ENCODE measurements at regions of chr3 and their contacts with region 1.

Region 1: GRCh38 chr3:61927332-61927731 is 366.0 kb downstream of the PTPRG start:
- DNase-seq: peak; percentile 69 to 84
- ATAC-seq: peak; percentile 59 to 64
- H3K4me3 ChIP-seq: peak overlapping the region; percentile 4 to 42 (median 26)
- H3K27ac ChIP-seq: peak overlapping the region; percentile 86 to 93 (median 91)
- H3K4me1 ChIP-seq: peaks cover 54 to 73% of the 10 kb centered on the region in 2 donors
- H3K27me3 ChIP-seq: no peaks in the 10 kb centered on the region
- CTCF ChIP-seq: no peak
- POLR2A ChIP-seq: no peak

Region 2: GRCh38 chr3:61704807-61705206 is 222.5 kb before region 1 on chr3:
- in situ Hi-C with region 1: no loop called
- intact Hi-C with region 1: loop called (anchors 1 kb)
- DNase-seq: no peak
- ATAC-seq: no peak
- H3K4me3 ChIP-seq: no peak overlapping the region
- H3K27ac ChIP-seq: no peak overlapping the region
- H3K4me1 ChIP-seq: peaks cover under 1 to 24% of the 10 kb centered on the region in 2 donors
- H3K27me3 ChIP-seq: no peaks in the 10 kb centered on the region
- CTCF ChIP-seq: no peak
- POLR2A ChIP-seq: no peak

Region 3: GRCh38 chr3:61872077-61872706 is 55.1 kb before region 1 on chr3:
- in situ Hi-C with region 1: no loop called
- intact Hi-C with region 1: loop called (anchors 5 kb)
- DNase-seq: no peak
- ATAC-seq: no peak
- H3K4me3 ChIP-seq: no peak overlapping the region
- H3K27ac ChIP-seq: no peak overlapping the region
- H3K4me1 ChIP-seq: peaks cover 41 to 49% of the 10 kb centered on the region in 2 donors
- H3K27me3 ChIP-seq: no peaks in the 10 kb centered on the region
- CTCF ChIP-seq: no peak
- POLR2A ChIP-seq: no peak

Region 4: DNA sequence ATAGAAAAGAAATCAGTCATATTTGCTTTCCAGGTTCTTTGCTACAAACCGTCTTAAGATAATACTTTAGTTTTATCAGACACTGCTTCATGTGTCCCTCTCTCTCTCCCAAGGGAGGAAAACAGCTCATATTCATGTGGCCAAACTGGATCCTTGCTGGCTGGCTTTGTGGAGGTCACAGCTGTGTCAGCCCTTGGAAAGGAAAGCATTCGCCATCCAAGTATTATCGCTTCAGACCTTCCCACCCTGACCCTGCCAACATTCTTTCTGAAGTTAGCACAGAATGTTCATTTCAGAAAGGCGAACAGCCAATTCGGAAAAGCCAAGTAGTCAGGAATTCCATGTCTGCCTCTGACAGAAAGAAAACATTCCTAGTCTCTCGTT is 232.4 kb after region 1 on chr3:
- in situ Hi-C with region 1: no loop called
- intact Hi-C with region 1: loop called (anchors 5 kb)
- DNase-seq: peak; percentile 92
- ATAC-seq: peak; percentile 92
- H3K4me3 ChIP-seq: peak overlapping the region; percentile 2 to 40 (median 6)
- H3K27ac ChIP-seq: peak overlapping the region; percentile 89 to 93 (median 91)
- H3K4me1 ChIP-seq: peaks cover 49 to 65% of the 10 kb centered on the region in 2 donors
- H3K27me3 ChIP-seq: no peaks in the 10 kb centered on the region
- CTCF ChIP-seq: no peak
- POLR2A ChIP-seq: peak; percentile 23 to 64

Region 5: DNA sequence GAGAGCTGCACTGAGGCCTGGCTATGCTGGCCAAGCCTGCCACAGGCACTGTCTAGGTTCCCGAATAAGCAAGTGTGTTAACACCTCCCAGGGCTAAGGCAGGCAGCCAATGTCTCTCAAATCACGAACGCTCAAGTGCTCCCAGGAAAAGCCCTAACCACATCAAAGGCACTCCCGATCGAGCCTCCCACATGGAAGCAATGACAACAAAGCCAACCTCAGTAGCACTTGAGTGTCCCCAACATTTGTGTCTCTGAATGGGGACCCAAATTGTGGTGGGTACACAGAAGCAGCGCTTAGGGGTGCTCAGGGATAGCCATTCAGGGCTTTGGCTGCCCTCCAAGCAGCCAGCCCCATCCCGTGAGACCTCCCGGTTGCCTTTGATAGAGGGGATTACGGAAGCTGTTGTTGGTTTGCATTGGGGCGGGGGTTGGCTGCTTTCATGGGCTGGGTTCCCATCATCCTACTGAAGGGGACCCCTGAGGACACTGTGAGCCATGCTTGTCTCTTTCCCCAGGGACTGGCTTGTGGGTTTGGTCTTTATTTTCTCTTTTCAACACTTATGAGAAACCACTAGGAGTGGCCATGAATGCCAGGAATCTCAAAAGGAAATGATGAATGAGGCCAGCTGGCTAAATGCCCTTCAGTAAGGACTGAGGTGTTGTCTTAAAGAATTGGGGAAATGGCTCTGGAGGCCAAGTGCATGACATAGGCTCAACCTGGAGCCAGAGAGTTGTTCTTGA is 680.1 kb after region 1 on chr3:
- in situ Hi-C with region 1: no loop called
- intact Hi-C with region 1: no loop called
- DNase-seq: no peak
- ATAC-seq: no peak
- H3K4me3 ChIP-seq: no peak overlapping the region
- H3K27ac ChIP-seq: no peak overlapping the region
- H3K4me1 ChIP-seq: peaks cover 0 to 4% of the 10 kb centered on the region in 2 donors
- H3K27me3 ChIP-seq: no peaks in the 10 kb centered on the region
- CTCF ChIP-seq: no peak
- POLR2A ChIP-seq: no peak